WTC11 (cell line): ENCODE measurements at regions of chr20 and their contacts with region 1.

Region 1: DNA sequence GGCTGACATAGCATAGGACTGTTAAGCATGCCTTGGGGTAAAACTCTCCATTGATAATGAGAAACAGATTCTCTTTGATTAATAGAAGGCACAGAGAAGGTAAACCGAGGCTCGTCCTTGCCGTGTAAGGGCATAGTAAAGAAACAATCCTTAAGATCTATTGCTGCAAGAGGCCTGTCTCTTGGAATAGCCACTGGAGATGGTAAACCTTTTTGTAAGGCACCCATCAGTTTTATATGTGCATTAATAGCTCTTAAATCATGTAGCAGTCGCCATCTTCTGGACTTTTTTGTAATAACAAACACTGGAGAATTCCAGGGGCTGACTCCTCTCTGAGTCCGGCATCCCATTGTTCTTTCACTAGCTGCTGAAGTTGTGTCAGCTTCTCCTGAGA is 8.4 kb upstream of the ABHD12 start:
- DNase-seq: no peak
- ATAC-seq: peak; percentile 92
- H3K4me3 Mint-ChIP-seq: no peak overlapping the region
- H3K27ac Mint-ChIP-seq: no peak overlapping the region
- H3K4me1 Mint-ChIP-seq: peaks cover 20% of the 10 kb centered on the region
- H3K27me3 Mint-ChIP-seq: peaks cover 17% of the 10 kb centered on the region
- CTCF ChIP-seq: 0 out of 2 replicates have a peak, but pooled peaks have one; percentile 19

Region 2: DNA sequence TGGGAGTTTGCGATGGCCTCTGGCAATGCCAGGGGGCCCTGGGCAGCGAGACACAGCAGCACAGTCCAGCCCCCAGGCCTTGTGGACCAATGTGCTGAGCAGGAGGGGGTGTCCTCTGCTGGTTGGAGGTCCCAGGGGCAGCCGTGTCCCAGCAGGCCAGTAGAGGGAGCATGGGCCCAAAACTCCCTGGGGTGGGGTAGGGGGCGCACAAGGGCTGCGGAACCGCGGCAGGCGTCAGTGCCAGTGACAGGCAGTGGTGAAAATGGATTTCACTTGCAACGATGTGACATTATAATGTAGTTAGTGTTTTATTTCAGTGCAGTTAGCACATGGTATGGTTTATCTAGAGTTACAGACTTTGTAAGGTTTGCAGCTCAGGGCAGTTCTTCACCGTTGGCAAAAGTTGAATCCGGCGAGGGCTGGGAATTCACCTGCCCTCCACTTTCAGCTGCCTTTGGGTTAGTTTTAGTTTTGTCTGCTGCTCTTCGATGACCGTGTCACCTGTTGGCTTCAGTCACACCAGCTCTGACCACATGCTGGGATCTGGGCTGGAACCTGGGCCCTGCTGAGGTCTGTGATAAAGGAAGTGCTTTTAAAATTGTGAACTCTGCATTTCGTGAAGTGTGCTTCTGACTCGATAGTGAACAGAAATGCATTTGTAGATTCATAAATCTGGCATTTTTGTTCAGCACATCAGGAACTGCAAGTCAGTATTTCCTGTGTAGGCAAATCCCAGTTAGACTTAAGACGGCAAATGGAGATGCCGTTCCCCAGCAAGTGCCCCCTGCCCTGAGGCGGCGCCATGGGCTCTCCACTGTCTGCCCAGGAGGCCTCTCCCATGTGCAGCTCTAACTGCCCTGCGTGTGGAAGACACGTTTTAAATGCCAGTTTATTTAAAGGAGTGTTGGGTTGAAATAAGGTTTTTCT is 104.3 kb before region 1 on chr20:
- CTCF ChIA-PET with region 1: interaction called, 78 read pairs
- POLR2A ChIA-PET with region 1: no interaction called
- DNase-seq: peak; percentile 85
- ATAC-seq: peak; percentile 83
- H3K4me3 Mint-ChIP-seq: no peak overlapping the region
- H3K27ac Mint-ChIP-seq: no peak overlapping the region
- H3K4me1 Mint-ChIP-seq: peaks cover 28% of the 10 kb centered on the region
- H3K27me3 Mint-ChIP-seq: no peaks in the 10 kb centered on the region
- CTCF ChIP-seq: peak; percentile 56

Region 3: DNA sequence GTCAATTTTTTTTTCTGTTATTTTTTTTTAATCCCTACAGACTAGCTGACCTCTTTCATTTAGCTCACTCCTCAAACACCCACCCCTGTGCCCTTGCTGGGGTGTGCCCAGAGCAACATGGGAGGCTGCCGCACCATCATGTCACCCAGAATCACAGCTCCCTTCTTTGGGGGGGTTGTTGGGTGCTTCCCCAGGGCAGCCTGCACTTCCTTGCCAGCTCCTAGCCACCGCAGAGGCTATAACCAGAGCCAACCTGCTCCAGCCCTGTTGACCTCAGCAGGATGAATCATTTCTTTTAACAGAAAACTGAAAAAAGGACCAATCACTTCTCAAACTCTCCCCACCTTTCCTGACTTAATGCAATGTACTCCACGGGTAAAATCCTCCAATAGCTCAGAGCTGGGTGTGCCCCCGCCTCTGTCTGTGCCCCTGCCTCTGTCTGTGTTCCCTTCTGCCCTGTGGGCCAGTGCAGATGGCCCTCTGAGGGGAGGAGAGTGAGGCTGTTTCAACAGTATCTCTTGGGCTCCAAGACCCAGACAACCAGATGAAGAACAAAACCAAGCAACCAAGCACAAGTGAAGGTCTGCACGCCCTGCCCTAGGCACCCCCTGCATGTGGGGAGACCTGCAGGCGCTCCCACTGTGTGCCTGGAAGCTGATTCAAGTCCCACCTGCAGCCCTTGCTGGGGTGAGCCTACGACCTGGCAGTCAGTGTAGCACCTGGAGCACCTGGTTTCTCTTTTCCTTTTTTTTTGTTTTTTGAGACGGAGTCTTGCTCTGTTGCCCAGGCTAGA is 83.4 kb before region 1 on chr20:
- CTCF ChIA-PET with region 1: interaction called, 14 read pairs
- POLR2A ChIA-PET with region 1: no interaction called
- DNase-seq: peak; percentile 6
- ATAC-seq: no peak
- H3K4me3 Mint-ChIP-seq: no peak overlapping the region
- H3K27ac Mint-ChIP-seq: peak overlapping the region; percentile 84; the same call in 1 of the 2 replicates
- H3K4me1 Mint-ChIP-seq: peaks cover 6% of the 10 kb centered on the region
- H3K27me3 Mint-ChIP-seq: no peaks in the 10 kb centered on the region
- CTCF ChIP-seq: no peak

Region 4: GRCh38 chr20:25336561-25337422 is 62.2 kb before region 1 on chr20:
- CTCF ChIA-PET with region 1: interaction called, 51 read pairs
- POLR2A ChIA-PET with region 1: no interaction called
- DNase-seq: peak; percentile 53
- ATAC-seq: peak; percentile 87
- H3K4me3 Mint-ChIP-seq: no peak overlapping the region
- H3K27ac Mint-ChIP-seq: peak overlapping the region; percentile 72
- H3K4me1 Mint-ChIP-seq: peaks cover 32% of the 10 kb centered on the region
- H3K27me3 Mint-ChIP-seq: no peaks in the 10 kb centered on the region
- CTCF ChIP-seq: no peak

Region 5: DNA sequence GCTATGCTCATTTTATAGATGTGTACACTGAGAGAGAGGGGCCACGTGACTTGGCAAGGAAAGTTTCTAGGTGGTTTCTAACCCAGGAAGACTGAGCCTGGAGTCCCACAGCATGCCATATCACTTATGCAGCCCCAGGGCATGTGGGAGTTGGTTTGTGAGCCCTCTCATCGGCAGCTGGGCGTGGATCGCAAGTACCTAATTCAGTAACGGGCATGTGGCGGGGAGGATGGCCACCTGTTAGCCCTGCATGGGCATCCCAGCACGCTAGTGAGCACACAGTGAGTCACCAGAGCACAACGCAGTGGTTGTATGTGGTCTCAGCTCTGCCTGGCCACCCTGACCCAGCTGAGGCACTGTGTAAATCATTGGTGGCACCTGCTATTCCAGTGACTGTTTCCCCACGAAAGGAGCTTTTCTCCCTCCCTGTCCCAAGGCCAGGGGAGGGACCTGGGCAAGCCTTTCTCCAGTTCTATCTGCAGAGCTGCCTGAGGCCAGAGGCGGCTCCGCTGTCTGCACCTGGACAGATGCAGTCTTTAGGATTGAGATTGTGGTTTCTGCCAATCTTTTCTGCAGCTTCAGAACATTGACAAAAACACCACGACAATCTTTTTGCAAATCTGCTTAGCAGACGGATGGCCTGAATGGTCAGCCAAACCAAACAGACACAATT is 98.1 kb after region 1 on chr20:
- CTCF ChIA-PET with region 1: no interaction called
- POLR2A ChIA-PET with region 1: no interaction called
- DNase-seq: no peak
- ATAC-seq: no peak
- H3K4me3 Mint-ChIP-seq: no peak overlapping the region
- H3K27ac Mint-ChIP-seq: no peak overlapping the region
- H3K4me1 Mint-ChIP-seq: no peaks in the 10 kb centered on the region
- H3K27me3 Mint-ChIP-seq: no peaks in the 10 kb centered on the region
- CTCF ChIP-seq: no peak